T-cell (primary cell): ENCODE measurements at regions of chr1 and their contacts with region 1.

Region 1: DNA sequence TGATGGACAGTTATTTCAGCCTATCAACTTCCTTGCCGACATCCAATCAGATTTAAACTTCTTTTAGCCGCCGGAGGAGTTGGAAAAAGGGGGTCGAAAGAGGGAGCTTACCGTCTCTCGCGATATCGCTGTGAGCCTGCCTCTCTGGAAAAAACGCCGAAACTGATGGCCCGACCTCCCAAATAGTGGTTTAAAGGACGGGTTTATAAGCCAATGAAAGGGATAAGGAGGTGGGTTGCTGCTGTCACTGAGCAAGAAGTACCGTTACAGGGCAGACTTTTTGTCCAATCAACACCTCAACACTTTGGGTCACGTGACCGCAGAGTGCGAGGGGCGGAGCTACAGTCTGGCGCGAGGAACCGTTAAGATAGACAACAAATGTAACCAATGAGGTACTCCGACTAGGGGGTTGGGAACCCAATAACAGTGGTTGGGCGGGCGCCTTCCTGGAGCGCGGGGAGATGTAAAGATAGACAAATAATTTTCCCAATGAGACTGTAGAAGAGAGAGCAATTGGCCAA is at the start of gene RBM15:
- DNase-seq: peak; percentile 87 to 100 (median 96)
- ATAC-seq: peak; percentile 72 to 77 (median 74)
- H3K4me3 ChIP-seq: peak within 1 kb of the TSS; percentile 98
- H3K4me3 Mint-ChIP-seq: no peak within 1 kb of the TSS
- H3K27ac ChIP-seq: peak within 1 kb of the TSS; percentile 98
- H3K27ac Mint-ChIP-seq: no peak within 1 kb of the TSS
- H3K4me1 ChIP-seq: peaks cover 30 to 37% of the 10 kb centered on the region in 2 experiments
- H3K4me1 Mint-ChIP-seq: peaks cover 55 to 63% (median 57%) of the 10 kb centered on the region in 3 donors
- H3K27me3 ChIP-seq: no peaks in the 10 kb centered on the region
- H3K27me3 Mint-ChIP-seq: no peaks in the 10 kb centered on the region
- total RNA-seq, gene RBM15: 41.1 to 46.0 (median 43.7) TPM

Region 2: DNA sequence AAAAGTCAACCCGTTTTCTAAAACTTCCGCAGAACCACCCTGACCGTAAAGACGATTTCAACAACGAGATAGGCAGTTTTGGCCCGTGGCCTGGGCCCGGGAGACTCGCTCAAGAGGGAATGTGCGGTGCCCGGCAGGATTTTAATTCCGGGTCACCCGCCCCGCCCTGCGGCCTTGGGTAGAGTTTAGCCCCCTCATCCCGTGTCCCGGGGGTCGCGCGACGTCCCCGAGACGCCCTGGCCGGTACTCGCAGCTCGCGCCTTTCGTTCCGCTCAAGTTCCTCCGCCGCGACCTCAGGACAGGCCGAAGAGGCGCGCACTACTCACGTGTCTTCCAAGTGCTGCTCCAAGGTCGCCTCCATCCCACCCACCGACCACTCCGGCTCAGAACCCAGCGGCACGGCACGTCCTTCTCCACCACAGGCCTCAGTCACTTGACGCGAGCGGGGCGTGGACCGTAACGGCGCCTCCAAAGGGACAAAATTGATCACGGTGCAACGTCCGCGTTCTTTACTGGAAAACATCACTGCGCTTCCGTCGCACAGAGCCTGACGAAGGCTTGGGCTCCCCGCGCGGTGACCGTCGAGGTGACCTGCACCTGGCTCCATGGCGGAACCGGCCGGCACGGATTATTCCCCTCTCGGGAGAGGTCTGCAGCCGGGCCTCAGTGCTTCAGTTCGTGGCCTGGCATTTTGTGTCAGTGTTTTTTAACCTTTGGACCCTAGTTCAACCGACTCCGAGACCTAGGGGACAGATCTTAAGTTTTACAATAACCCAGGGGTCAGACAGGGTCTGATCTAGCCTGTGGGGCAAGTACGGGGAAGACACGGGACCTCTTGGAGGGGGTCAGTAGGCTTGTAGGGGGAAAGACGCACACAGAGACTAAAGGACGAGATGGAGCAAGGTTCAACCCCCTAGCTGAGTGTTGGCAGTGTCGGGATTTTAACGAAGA is 68.6 kb after region 1 on chr1 and contains the start of gene LAMTOR5:
- CTCF ChIA-PET with region 1: interaction called, 4 to 25 read pairs
- POLR2A ChIA-PET with region 1: interaction called in 1 of 2 experiments, 5 read pairs
- DNase-seq: peak; percentile 78 to 94 (median 86)
- ATAC-seq: peak; percentile 94 to 96 (median 96)
- H3K4me3 ChIP-seq: peak within 1 kb of the TSS; percentile 83 to 92
- H3K4me3 Mint-ChIP-seq: peak within 1 kb of the TSS; percentile 97 to 100 (median 98)
- H3K27ac ChIP-seq: peak within 1 kb of the TSS; percentile 85
- H3K27ac Mint-ChIP-seq: peak within 1 kb of the TSS; percentile 97 to 99
- H3K4me1 ChIP-seq: peaks cover 16% of the 10 kb centered on the region in 2 experiments
- H3K4me1 Mint-ChIP-seq: peaks cover 23 to 31% (median 30%) of the 10 kb centered on the region in 3 donors
- H3K27me3 ChIP-seq: no peaks in the 10 kb centered on the region
- H3K27me3 Mint-ChIP-seq: no peaks in the 10 kb centered on the region
- total RNA-seq, gene LAMTOR5: 60.0 to 68.6 (median 67.0) TPM

Region 3: GRCh38 chr1:110449661-110450651 is 111.0 kb after region 1 on chr1:
- CTCF ChIA-PET with region 1: no interaction called
- POLR2A ChIA-PET with region 1: no interaction called
- DNase-seq: no peak
- ATAC-seq: no peak
- H3K4me3 ChIP-seq: no peak overlapping the region
- H3K4me3 Mint-ChIP-seq: no peak overlapping the region
- H3K27ac ChIP-seq: no peak overlapping the region
- H3K27ac Mint-ChIP-seq: no peak overlapping the region
- H3K4me1 ChIP-seq: no peaks in the 10 kb centered on the region
- H3K4me1 Mint-ChIP-seq: no peaks in the 10 kb centered on the region
- H3K27me3 ChIP-seq: peaks cover 2 to 14% of the 10 kb centered on the region in 2 experiments
- H3K27me3 Mint-ChIP-seq: peaks cover 4 to 10% of the 10 kb centered on the region in 2 donors